Psoas muscle (tissue), 8 donors: ENCODE measurements at regions of chr18 and their contacts with region 1.

Region 1: GRCh38 chr18:63367053-63367953 is at the start of gene KDSR:
- DNase-seq: peak; percentile 95 to 98
- ATAC-seq: peak; percentile 91 to 94 (median 92)
- H3K4me3 ChIP-seq: peak within 1 kb of the TSS; percentile 70
- H3K27ac ChIP-seq: peak within 1 kb of the TSS; percentile 90
- H3K4me1 ChIP-seq: peaks cover 25% of the 10 kb centered on the region
- H3K27me3 ChIP-seq: no peaks in the 10 kb centered on the region
- CTCF ChIP-seq: no peak
- total RNA-seq, gene KDSR: 17.6 to 33.0 (median 25.6) TPM

Region 2: DNA sequence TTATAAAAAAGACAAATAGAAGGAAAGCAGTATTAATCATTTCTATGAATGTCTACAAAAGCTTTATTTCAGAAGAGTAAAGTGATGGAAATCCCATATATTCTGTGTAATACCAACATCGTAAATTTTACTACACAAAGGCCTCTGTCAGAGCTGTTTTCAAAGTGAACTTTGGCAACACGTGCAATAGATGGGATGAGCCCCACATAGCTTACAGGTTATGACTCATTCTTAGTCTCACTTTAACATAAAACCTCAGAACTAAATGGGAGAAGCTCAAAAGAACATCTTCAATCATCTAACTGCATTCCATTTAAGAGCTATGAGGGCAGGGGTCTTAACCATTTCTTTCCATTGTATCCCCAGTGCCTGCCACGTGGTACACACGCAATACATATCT is 43.5 kb after region 1 on chr18:
- intact Hi-C with region 1: loop called in 1 of 2 experiments (anchors 5 kb)
- DNase-seq: no peak
- ATAC-seq: no peak
- H3K4me3 ChIP-seq: no peak overlapping the region
- H3K27ac ChIP-seq: no peak overlapping the region
- H3K4me1 ChIP-seq: no peaks in the 10 kb centered on the region
- H3K27me3 ChIP-seq: no peaks in the 10 kb centered on the region
- CTCF ChIP-seq: no peak

Region 3: GRCh38 chr18:63422087-63422809 is 54.9 kb after region 1 on chr18 and contains the start of gene VPS4B:
- intact Hi-C with region 1: loop called (anchors 2 kb)
- DNase-seq: peak; percentile 100
- ATAC-seq: peak; percentile 97 to 99 (median 98)
- H3K4me3 ChIP-seq: peak within 1 kb of the TSS; percentile 98
- H3K27ac ChIP-seq: peak within 1 kb of the TSS; percentile 95
- H3K4me1 ChIP-seq: peaks cover 11% of the 10 kb centered on the region
- H3K27me3 ChIP-seq: no peaks in the 10 kb centered on the region
- CTCF ChIP-seq: no peak
- total RNA-seq, gene VPS4B: 17.7 to 24.8 (median 20.9) TPM